Posterior vena cava (tissue), 2 donors: ENCODE measurements at regions of chr9 and their contacts with region 1.

Region 1: GRCh38 chr9:37209431-37210386 is 89.3 kb downstream of the ZCCHC7 start:
- DNase-seq: peak; percentile 40

Region 2: GRCh38 chr9:36862206-36863145 is 347.2 kb before region 1 on chr9:
- intact Hi-C with region 1: loop called in 1 of 2 experiments (anchors 5 kb)
- DNase-seq: peak; percentile 78

Region 3: GRCh38 chr9:36903541-36904435 is 305.9 kb before region 1 on chr9:
- intact Hi-C with region 1: no loop called
- DNase-seq: no peak

Region 4: GRCh38 chr9:37156781-37157356 is 52.8 kb before region 1 on chr9:
- intact Hi-C with region 1: no loop called
- DNase-seq: no peak

Region 5: GRCh38 chr9:37592108-37592951 is 382.6 kb after region 1 on chr9 and contains the start of gene TOMM5:
- intact Hi-C with region 1: loop called in 1 of 2 experiments (anchors 10 kb)
- DNase-seq: peak; percentile 98
- total RNA-seq, gene TOMM5: 55.9 to 62.9 TPM